ENCODE measurements at regions of chr9 and their contacts with region 1.

Region 1: DNA sequence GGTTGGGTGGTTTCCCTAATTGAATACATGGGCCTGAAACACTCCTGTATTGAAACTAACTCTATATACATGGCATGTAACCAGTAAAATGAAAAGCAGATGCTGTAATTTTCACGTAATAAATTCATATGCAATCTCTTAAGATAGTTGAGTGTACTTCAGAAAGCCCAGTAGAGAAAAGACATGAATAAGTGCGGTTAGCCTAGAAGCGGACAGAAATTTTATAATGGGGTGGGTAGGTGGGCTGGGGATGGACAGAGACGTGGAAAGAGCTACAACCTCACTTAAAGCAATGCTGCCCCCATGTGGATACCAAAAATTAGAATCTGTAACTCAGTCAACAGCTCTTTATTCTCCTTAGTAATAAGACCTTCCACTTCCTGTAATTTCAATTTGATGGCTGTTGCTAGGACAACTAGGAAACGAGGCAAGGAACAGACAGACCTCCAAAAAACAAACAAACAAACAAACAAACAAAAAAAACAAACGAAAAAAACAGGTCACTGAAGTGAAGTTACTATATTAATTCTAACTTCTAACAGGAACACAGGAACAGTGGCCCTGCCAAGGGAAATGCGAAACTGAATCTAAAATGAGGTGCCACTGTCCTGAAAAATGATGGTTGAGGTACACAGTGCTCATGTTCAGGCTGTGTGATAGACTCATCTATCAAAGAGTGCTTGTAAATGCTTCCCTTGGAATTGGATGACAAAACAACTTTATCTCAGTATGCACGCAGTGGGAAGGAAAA is 103.4 kb upstream of the GNA14 start:
- DNase-seq: no peak
- H3K4me3 ChIP-seq: no peak overlapping the region
- H3K27ac ChIP-seq: no peak overlapping the region
- H3K4me1 ChIP-seq: no peaks in the 10 kb centered on the region; a peak in 2 of 7 replicates
- H3K27me3 ChIP-seq: no peaks in the 10 kb centered on the region
- CTCF ChIP-seq: peak; percentile 9 to 64 (median 64)
- EP300 ChIP-seq: no peak
- POLR2A ChIP-seq: no peak
- RAD21 ChIP-seq: peak; percentile 88 to 92

Region 2: GRCh38 chr9:77463151-77463550 is 288.4 kb before region 1 on chr9:
- CTCF ChIA-PET with region 1: interaction called, 62 read pairs
- POLR2A ChIA-PET with region 1: no interaction called
- DNase-seq: no peak
- H3K4me3 ChIP-seq: no peak overlapping the region
- H3K27ac ChIP-seq: no peak overlapping the region
- H3K4me1 ChIP-seq: peaks cover 0 to 6% (median 2%) of the 10 kb centered on the region in 4 experiments; a peak in 4 of 7 replicates
- H3K27me3 ChIP-seq: no peaks in the 10 kb centered on the region
- CTCF ChIP-seq: no peak
- EP300 ChIP-seq: no peak
- POLR2A ChIP-seq: no peak
- RAD21 ChIP-seq: no peak

Region 3: DNA sequence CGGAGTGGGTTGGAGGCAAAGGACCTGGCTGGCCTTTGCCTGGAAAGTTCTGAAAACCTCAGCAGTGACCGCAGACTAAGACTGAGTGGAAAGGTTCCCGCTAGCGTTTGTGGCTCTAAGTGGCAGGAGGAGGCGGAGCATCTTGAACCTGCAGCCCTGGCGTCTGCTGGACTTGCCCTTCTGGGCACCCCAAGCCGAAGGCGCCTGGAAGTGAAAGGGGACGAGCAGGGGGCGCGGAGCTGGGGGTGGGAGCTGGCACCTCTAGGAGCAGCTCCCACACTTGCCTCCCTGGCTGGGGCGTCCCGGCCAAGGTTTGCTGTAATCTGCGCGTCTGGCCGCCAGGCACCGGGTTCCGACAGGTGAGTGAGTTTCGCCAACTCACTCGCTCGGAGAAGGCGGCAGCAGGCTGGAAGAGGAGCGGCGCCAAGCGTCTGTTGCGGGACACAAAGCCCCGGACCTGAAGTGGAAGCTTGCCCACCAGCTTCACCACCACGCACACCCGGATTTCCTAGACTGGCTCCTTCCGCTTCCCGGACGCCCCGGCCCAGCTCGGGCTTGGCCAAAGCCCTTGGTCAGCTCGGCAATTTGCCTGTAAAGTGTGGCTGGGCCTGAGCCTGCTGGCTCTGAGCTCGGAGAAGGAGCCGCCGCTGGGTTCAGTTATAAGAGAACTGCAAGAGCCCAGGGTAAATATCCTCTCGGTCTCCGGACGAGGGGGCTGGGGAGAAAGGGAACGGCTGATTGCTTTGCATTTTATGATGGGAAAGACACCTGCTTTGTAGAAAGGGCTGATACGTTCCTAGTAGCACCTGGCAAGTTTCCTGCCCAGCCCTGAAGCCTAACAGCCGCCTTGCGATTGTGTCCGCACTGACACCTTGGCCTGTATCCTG is 103.0 kb before region 1 on chr9 and contains the start of gene GNA14:
- CTCF ChIA-PET with region 1: interaction called, 12 read pairs
- POLR2A ChIA-PET with region 1: no interaction called
- DNase-seq: peak in 1 of 2 experiments; percentile 85
- H3K4me3 ChIP-seq: peak within 1 kb of the TSS; percentile 47 to 79 (median 75)
- H3K27ac ChIP-seq: no peak within 1 kb of the TSS
- H3K4me1 ChIP-seq: peaks cover 0 to 17% (median 4%) of the 10 kb centered on the region in 4 experiments; a peak in 6 of 7 replicates
- H3K27me3 ChIP-seq: peaks cover 6 to 32% (median 21%) of the 10 kb centered on the region in 4 experiments
- CTCF ChIP-seq: peak; percentile 26 to 36 (median 27)
- EP300 ChIP-seq: no peak
- POLR2A ChIP-seq: no peak
- RAD21 ChIP-seq: peak; percentile 48 to 54
- total RNA-seq, gene GNA14: 3.2 and 3.4 TPM in 2 replicates

Region 4: GRCh38 chr9:77673941-77674791 is 77.3 kb before region 1 on chr9:
- CTCF ChIA-PET with region 1: interaction called, 16 read pairs
- POLR2A ChIA-PET with region 1: no interaction called
- DNase-seq: peak in 1 of 2 experiments; percentile 42
- H3K4me3 ChIP-seq: no peak overlapping the region
- H3K27ac ChIP-seq: no peak overlapping the region
- H3K4me1 ChIP-seq: no peaks in the 10 kb centered on the region
- H3K27me3 ChIP-seq: no peaks in the 10 kb centered on the region
- CTCF ChIP-seq: peak in 1 of 3 experiments; percentile 6; a peak in 1 of 4 replicates
- EP300 ChIP-seq: no peak
- POLR2A ChIP-seq: no peak
- RAD21 ChIP-seq: peak; percentile 32 to 54; a peak in 3 of 4 replicates

Region 5: GRCh38 chr9:77738932-77739331 is 12.6 kb before region 1 on chr9:
- CTCF ChIA-PET with region 1: interaction called, 15 read pairs
- POLR2A ChIA-PET with region 1: no interaction called
- DNase-seq: no peak
- H3K4me3 ChIP-seq: no peak overlapping the region
- H3K27ac ChIP-seq: no peak overlapping the region
- H3K4me1 ChIP-seq: peaks cover 1 to 12% (median 8%) of the 10 kb centered on the region in 4 experiments; a peak in 4 of 7 replicates
- H3K27me3 ChIP-seq: no peaks in the 10 kb centered on the region; a peak in 1 of 7 replicates
- CTCF ChIP-seq: no peak
- EP300 ChIP-seq: no peak
- POLR2A ChIP-seq: no peak
- RAD21 ChIP-seq: no peak